ENCODE measurements at regions of chr12 and their contacts with region 1.

Region 1: GRCh38 chr12:75505706-75506312 is 5.6 kb downstream of the KRR1 start:
- DNase-seq: no peak
- H3K4me3 ChIP-seq: no peak overlapping the region
- H3K27ac ChIP-seq: no peak overlapping the region
- H3K4me1 ChIP-seq: peaks cover 16 to 53% (median 27%) of the 10 kb centered on the region in 6 donors
- H3K27me3 ChIP-seq: no peaks in the 10 kb centered on the region
- CTCF ChIP-seq: peak; percentile 9 to 64 (median 46)
- POLR2A ChIP-seq: no peak

Region 2: DNA sequence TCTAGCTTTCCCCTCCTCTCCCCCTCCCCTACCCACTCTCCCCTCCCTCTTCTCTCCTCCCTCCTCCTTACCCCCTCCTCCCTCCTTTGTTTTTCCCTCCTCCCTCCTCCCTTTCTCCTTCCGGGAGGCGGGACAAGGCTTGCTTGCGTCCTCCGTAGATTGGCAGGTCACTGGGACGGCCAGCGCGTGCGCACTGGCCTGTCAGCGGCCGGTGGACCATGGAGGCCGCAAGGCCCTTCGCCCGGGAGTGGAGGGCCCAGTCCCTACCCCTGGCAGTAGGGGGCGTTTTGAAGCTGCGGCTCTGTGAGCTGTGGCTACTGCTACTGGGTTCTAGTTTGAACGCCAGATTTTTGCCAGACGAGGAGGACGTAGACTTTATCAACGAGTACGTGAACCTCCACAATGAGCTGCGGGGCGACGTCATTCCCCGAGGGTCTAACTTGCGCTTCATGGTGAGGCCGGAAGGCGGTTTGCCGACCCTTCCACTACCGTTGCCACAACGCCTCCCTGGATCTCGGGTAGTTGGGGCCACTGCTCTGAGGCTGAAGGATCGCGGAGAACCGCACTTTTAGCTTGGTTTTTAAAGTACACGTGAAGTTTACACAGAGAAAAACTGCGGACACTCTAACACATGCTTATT is 114.8 kb before region 1 on chr12 and contains the start of gene GLIPR1L2:
- intact Hi-C with region 1: loop called (anchors 5 kb)
- DNase-seq: peak; percentile 98
- H3K4me3 ChIP-seq: peak within 1 kb of the TSS; percentile 37 to 75 (median 46)
- H3K27ac ChIP-seq: peak within 1 kb of the TSS; percentile 73 to 96 (median 93)
- H3K4me1 ChIP-seq: peaks cover 21 to 36% (median 33%) of the 10 kb centered on the region in 6 donors
- H3K27me3 ChIP-seq: no peaks in the 10 kb centered on the region
- CTCF ChIP-seq: peak; percentile 84 to 94 (median 92)
- POLR2A ChIP-seq: peak in 1 of 3 donors; percentile 68
- total RNA-seq, gene GLIPR1L2: 0.44 to 3.2 (median 1.1) TPM in 6 of 7 donors, not detected in the other